ENCODE measurements at regions of chr2 and their contacts with region 1.

Region 1: GRCh38 chr2:118875316-118875715 is 27.9 kb upstream of the EN1 start:
- DNase-seq: no peak
- CTCF ChIP-seq: no peak

Region 2: DNA sequence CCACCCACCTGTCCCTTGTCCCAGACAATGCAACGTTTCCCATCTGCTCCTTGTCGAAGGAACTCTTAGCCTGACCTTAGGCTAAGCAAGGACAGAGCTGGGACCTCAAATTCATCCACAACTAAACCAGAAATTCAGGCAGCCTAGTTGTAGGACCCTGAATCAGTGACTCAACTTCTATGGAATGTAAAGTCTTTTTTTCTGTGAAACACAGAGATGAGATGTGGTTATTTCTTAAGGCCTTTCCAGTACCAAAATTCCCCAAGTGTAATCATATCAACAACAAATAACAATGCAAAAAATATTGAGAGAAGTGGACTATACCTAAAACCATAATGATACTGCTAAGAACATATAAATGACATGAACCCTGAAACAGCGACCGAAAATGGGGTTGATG is 74.6 kb before region 1 on chr2:
- CTCF ChIA-PET with region 1: no interaction called
- POLR2A ChIA-PET with region 1: no interaction called
- DNase-seq: no peak
- CTCF ChIP-seq: no peak

Region 3: GRCh38 chr2:118855451-118856279 is 19.7 kb before region 1 on chr2:
- CTCF ChIA-PET with region 1: interaction called, 11 read pairs
- POLR2A ChIA-PET with region 1: no interaction called
- DNase-seq: peak; percentile 90
- CTCF ChIP-seq: peak; percentile 94

Measured in GM10248 (cell line).